GM12878 (cell line): ENCODE measurements at regions of chr3 and their contacts with region 1.

Region 1: DNA sequence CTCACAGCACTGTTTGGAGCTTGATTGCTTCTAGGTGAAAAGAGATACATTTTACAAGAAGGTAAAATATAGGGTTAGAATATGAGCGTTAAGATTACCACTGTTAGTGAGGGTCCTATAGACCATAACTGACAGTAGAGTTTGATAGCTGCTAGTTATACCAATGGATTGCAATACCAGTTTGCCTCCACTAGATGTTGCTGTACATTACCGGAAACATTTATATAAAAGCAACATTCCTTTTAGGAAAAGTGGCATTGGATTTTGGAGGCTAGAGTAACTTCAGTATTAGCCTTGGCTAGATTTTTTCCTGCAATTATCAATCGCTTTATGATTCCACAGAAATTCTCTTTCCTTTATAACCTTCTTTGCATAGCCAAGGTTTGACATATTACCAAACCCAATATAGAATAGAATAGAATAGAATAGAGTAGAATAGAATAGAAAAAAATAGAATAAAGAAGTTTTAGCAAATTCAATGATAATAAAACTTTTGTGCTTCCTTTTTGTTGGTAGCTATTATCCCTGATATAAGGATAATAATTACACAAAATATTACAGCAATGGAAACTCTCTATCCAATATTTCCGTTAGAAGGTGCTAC is 1093.6 kb upstream of the ALCAM start:
- DNase-seq: no peak
- ATAC-seq: peak; percentile 58
- H3K4me3 ChIP-seq: no peak overlapping the region
- H3K27ac ChIP-seq: no peak overlapping the region
- H3K4me1 ChIP-seq: no peaks in the 10 kb centered on the region
- H3K27me3 ChIP-seq: no peaks in the 10 kb centered on the region
- CTCF ChIP-seq: peak; percentile 75 to 80 (median 77)
- EP300 ChIP-seq: no peak
- POLR2A ChIP-seq: no peak
- RAD21 ChIP-seq: peak; percentile 91

Region 2: DNA sequence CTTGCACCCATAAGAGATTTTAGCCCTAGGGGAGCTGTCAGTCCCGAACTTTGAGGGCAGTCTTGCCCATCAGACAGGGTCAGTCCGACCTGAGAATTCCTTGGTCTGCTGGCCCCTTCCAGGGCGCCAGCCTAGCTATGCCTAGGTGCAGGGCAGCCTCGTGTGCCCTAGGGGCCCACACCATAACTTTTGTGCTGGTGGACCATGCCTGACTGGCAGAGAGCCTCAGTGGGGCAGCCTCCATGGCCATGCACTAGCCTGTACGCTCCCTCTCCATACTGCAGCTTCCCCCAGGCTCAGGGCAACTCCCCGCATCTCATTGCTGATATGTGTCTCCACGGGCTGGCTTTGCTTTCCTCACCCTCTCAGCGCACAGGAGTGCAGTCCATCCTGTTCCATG is 257.8 kb after region 1 on chr3:
- CTCF ChIA-PET with region 1: no interaction called
- POLR2A ChIA-PET with region 1: no interaction called
- RAD21 ChIA-PET with region 1: no interaction called
- SMC1A ChIA-PET with region 1: no interaction called
- in situ Hi-C with region 1: no loop called
- intact Hi-C with region 1: no loop called
- DNase-seq: no peak
- ATAC-seq: no peak
- H3K4me3 ChIP-seq: no peak overlapping the region
- H3K27ac ChIP-seq: no peak overlapping the region
- H3K4me1 ChIP-seq: peaks cover 12% of the 10 kb centered on the region
- H3K27me3 ChIP-seq: no peaks in the 10 kb centered on the region
- CTCF ChIP-seq: no peak
- EP300 ChIP-seq: no peak
- POLR2A ChIP-seq: no peak
- RAD21 ChIP-seq: no peak

Region 3: GRCh38 chr3:104596551-104596950 is 323.4 kb after region 1 on chr3:
- CTCF ChIA-PET with region 1: interaction called, 7 read pairs
- POLR2A ChIA-PET with region 1: no interaction called
- RAD21 ChIA-PET with region 1: no interaction called
- SMC1A ChIA-PET with region 1: no interaction called
- in situ Hi-C with region 1: no loop called
- intact Hi-C with region 1: loop called (anchors 10 kb)
- DNase-seq: peak; percentile 20
- ATAC-seq: peak; percentile 91
- H3K4me3 ChIP-seq: no peak overlapping the region
- H3K27ac ChIP-seq: no peak overlapping the region
- H3K4me1 ChIP-seq: no peaks in the 10 kb centered on the region
- H3K27me3 ChIP-seq: no peaks in the 10 kb centered on the region
- CTCF ChIP-seq: peak; percentile 52 to 56 (median 56)
- EP300 ChIP-seq: no peak
- POLR2A ChIP-seq: no peak
- RAD21 ChIP-seq: peak; percentile 78

Region 4: GRCh38 chr3:104987859-104988258 is 714.7 kb after region 1 on chr3:
- CTCF ChIA-PET with region 1: no interaction called
- POLR2A ChIA-PET with region 1: no interaction called
- RAD21 ChIA-PET with region 1: no interaction called
- SMC1A ChIA-PET with region 1: no interaction called
- in situ Hi-C with region 1: no loop called
- intact Hi-C with region 1: loop called (anchors 10 kb)
- DNase-seq: no peak
- ATAC-seq: no peak
- H3K4me3 ChIP-seq: no peak overlapping the region
- H3K27ac ChIP-seq: no peak overlapping the region
- H3K4me1 ChIP-seq: no peaks in the 10 kb centered on the region
- H3K27me3 ChIP-seq: no peaks in the 10 kb centered on the region
- CTCF ChIP-seq: no peak
- EP300 ChIP-seq: no peak
- POLR2A ChIP-seq: no peak
- RAD21 ChIP-seq: no peak